ENCODE measurements at regions of chr15 and their contacts with region 1.

Region 1: GRCh38 chr15:65326117-65326526 is 21.6 kb downstream of the RNU5B-1 start:
- DNase-seq: peak; percentile 57
- ATAC-seq: peak; percentile 41 to 65

Region 2: GRCh38 chr15:65377976-65378366 is 51.8 kb after region 1 on chr15 and contains the start of gene IGDCC3:
- intact Hi-C with region 1: loop called in 1 of 2 experiments (anchors 2 kb)
- DNase-seq: no peak
- ATAC-seq: peak in 1 of 2 donors; percentile 29
- total RNA-seq, gene IGDCC3: 0.09 TPM in 1 of 2 donors, not detected in the other

Region 3: DNA sequence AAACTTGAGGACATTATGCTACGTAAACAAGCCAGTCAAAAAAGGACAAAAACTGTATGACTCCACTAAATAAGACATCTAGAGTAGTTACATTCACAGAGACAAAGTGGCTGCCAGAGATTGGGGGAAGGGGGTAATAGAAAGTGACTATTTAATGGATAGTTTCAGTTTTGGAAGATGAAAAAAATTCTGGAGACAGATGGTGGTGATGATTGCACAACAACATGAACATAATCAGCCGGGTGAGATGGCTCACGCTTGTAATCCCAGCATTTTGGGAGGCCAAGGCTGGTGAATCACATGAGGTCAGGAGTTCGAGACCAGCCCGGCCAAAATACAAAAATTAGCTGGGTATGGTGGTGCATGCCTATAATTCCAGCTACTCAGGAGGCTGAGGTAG is 150.8 kb after region 1 on chr15:
- intact Hi-C with region 1: no loop called
- DNase-seq: no peak
- ATAC-seq: no peak

Measured in left cardiac atrium (tissue), 4 donors.